Activated B cell treated with CpG ODN at 0.5 μM for 24 hours (primary cell): ENCODE measurements at regions of chr7 and their contacts with region 1.

Region 1: DNA sequence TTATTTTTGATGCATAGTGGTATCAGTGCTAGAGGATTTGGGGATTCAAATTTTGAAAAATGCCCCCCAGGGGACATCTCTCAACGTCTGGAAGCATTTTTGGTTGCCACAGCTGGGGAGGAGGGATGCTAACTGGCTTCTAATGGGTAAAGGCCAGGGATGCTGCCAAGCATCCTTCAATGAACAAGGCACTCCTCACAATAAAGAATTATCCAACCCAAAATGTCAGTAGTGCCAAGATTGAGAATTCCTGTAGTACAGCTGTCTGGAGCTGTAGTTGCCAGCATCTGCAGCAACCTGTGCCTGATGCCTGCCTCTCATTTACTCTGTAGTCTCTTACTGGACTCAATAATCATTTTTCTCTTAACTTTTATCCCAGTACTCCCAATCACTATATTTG is 53.5 kb downstream of the SEPTIN7 start:
- DNase-seq: no peak
- ATAC-seq: no peak
- H3K4me3 Mint-ChIP-seq: no peak overlapping the region
- H3K27ac Mint-ChIP-seq: no peak overlapping the region
- H3K4me1 Mint-ChIP-seq: peaks cover 58% of the 10 kb centered on the region
- H3K27me3 Mint-ChIP-seq: no peaks in the 10 kb centered on the region
- CTCF ChIP-seq: no peak

Region 2: DNA sequence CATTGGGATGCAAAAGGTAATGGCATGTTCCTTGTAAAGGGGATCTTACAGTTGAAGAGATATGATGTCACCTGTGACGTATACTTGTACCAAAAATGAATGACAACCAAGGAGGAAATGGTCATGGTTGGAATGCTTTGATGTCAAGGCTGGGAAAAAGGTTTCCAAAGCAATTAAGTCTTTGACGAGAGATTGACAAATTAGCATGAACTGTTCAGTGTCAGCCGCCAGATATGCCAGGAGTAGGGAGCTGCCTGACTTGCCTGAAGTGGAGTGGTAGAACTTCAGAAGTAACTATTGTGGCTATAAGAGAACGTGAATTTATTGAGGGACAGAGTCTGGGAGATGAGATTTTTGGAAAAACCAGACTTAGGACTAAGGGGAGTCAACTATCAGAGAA is 34.7 kb after region 1 on chr7:
- CTCF ChIA-PET with region 1: no interaction called
- POLR2A ChIA-PET with region 1: no interaction called
- intact Hi-C with region 1: loop called (anchors 5 kb)
- DNase-seq: no peak
- ATAC-seq: no peak
- H3K4me3 Mint-ChIP-seq: no peak overlapping the region
- H3K27ac Mint-ChIP-seq: no peak overlapping the region
- H3K4me1 Mint-ChIP-seq: peaks cover 15% of the 10 kb centered on the region
- H3K27me3 Mint-ChIP-seq: no peaks in the 10 kb centered on the region
- CTCF ChIP-seq: no peak